AG04450 (cell line): ENCODE measurements at regions of chr5 and their contacts with region 1.

Region 1: GRCh38 chr5:98510143-98510985 is 263.1 kb upstream of the RGMB start:
- DNase-seq: no peak
- H3K4me3 ChIP-seq: no peak overlapping the region
- H3K27ac ChIP-seq: no peak overlapping the region
- H3K27me3 ChIP-seq: no peaks in the 10 kb centered on the region
- CTCF ChIP-seq: no peak

Region 2: DNA sequence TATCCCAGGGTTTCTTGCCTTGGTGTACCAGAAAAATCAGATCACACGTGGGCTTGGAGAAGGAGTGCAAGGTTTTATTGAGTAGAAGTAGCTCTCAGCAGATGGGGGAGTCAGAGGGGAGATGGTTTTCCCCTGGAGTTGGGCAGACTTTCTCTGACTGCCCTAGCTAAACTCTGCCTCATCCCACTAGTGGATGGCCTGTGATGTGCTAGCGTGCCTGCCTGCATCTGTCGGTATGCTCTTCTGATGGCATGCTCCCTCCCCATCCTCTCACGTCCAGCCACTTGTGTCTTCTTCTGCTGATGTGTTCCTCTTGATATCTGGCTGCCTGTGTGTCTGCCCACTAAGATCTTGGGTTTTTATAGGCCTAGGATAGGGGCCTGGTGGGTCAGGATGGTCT is 353.0 kb before region 1 on chr5:
- CTCF ChIA-PET with region 1: no interaction called
- POLR2A ChIA-PET with region 1: interaction called, 10 read pairs
- DNase-seq: no peak
- H3K4me3 ChIP-seq: no peak overlapping the region
- H3K27ac ChIP-seq: peak overlapping the region; percentile 1
- H3K27me3 ChIP-seq: no peaks in the 10 kb centered on the region
- CTCF ChIP-seq: no peak

Region 3: GRCh38 chr5:98231089-98231488 is 279.3 kb before region 1 on chr5:
- CTCF ChIA-PET with region 1: no interaction called
- POLR2A ChIA-PET with region 1: no interaction called
- DNase-seq: no peak
- H3K4me3 ChIP-seq: no peak overlapping the region
- H3K27ac ChIP-seq: no peak overlapping the region
- H3K27me3 ChIP-seq: no peaks in the 10 kb centered on the region
- CTCF ChIP-seq: no peak